Calu3 (cell line): ENCODE measurements at regions of chr1 and their contacts with region 1.

Region 1: GRCh38 chr1:150674881-150675280 is 22.1 kb downstream of the GOLPH3L start:
- DNase-seq: no peak
- H3K4me3 Mint-ChIP-seq: no peak overlapping the region
- H3K27ac Mint-ChIP-seq: no peak overlapping the region
- H3K4me1 Mint-ChIP-seq: no peaks in the 10 kb centered on the region
- H3K27me3 Mint-ChIP-seq: no peaks in the 10 kb centered on the region
- CTCF ChIP-seq: no peak

Region 2: GRCh38 chr1:150688786-150689185 is 13.9 kb after region 1 on chr1:
- CTCF ChIA-PET with region 1: interaction called, 3 read pairs
- intact Hi-C with region 1: loop called (anchors 2 kb)
- DNase-seq: no peak
- H3K4me3 Mint-ChIP-seq: no peak overlapping the region
- H3K27ac Mint-ChIP-seq: peak overlapping the region; percentile 27
- H3K4me1 Mint-ChIP-seq: peaks cover 10% of the 10 kb centered on the region
- H3K27me3 Mint-ChIP-seq: no peaks in the 10 kb centered on the region
- CTCF ChIP-seq: no peak